ENCODE measurements at regions of chr4 and their contacts with region 1.

Region 1: DNA sequence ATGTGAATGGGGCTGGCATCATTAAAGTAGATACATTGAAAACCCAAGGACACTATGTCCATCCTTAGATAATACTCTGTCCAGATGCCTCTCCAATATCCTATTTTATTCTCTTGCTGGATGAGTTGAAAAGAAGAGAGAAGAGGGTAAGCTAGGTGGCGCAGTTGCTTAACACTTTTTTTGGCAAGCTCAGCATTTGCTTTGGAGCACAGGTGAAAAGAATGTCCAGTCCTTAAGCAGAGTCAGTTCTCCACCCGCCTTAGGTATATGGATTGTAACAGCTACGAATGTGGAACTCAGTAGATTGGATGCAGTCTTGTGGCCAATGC is 208.4 kb downstream of the NWD2 start:
- DNase-seq: peak; percentile 10 to 39 (median 22)
- H3K4me3 ChIP-seq: peak overlapping the region in 1 of 3 experiments; percentile 81
- H3K4me3 Mint-ChIP-seq: peak overlapping the region; percentile 78 to 89
- H3K27ac ChIP-seq: no peak overlapping the region
- H3K27ac Mint-ChIP-seq: peak overlapping the region in 1 of 7 donors; percentile 63
- H3K4me1 ChIP-seq: peaks cover 13 to 16% of the 10 kb centered on the region in 2 donors
- H3K4me1 Mint-ChIP-seq: peaks cover 16% of the 10 kb centered on the region
- H3K27me3 ChIP-seq: peaks cover 36 to 52% of the 10 kb centered on the region in 2 donors
- H3K27me3 Mint-ChIP-seq: peaks cover 38 to 53% (median 43%) of the 10 kb centered on the region in 3 donors
- CTCF ChIP-seq: peak; percentile 45

Region 2: DNA sequence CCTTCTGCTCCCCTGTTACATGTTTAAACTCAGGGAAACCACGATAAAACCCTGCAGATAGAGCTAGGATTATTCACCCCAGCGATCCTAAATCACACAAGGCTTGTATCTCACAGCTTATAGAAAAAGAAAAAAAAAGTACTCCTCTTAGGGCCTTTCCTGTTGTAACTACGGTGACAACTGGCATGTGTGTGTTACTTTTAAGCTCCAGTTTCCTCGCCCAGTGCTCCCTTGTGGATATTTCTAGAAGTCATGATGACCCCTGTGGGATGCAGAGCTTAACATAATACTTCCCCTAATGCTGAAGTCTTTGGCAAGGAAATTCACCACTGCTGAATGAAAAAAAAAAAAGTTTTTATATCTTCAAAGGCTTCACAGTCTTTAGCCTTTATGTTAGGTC is 93.7 kb before region 1 on chr4:
- intact Hi-C with region 1: no loop called
- DNase-seq: no peak
- H3K4me3 ChIP-seq: no peak overlapping the region
- H3K4me3 Mint-ChIP-seq: no peak overlapping the region
- H3K27ac ChIP-seq: no peak overlapping the region
- H3K27ac Mint-ChIP-seq: no peak overlapping the region
- H3K4me1 ChIP-seq: no peaks in the 10 kb centered on the region
- H3K4me1 Mint-ChIP-seq: no peaks in the 10 kb centered on the region
- H3K27me3 ChIP-seq: no peaks in the 10 kb centered on the region
- H3K27me3 Mint-ChIP-seq: peaks cover 0 to 4% (median 2%) of the 10 kb centered on the region in 3 donors
- CTCF ChIP-seq: no peak

Region 3: GRCh38 chr4:37490391-37491347 is 37.8 kb after region 1 on chr4:
- intact Hi-C with region 1: no loop called
- DNase-seq: no peak
- H3K4me3 ChIP-seq: no peak overlapping the region
- H3K4me3 Mint-ChIP-seq: no peak overlapping the region
- H3K27ac ChIP-seq: no peak overlapping the region
- H3K27ac Mint-ChIP-seq: no peak overlapping the region
- H3K4me1 ChIP-seq: no peaks in the 10 kb centered on the region
- H3K4me1 Mint-ChIP-seq: no peaks in the 10 kb centered on the region
- H3K27me3 ChIP-seq: no peaks in the 10 kb centered on the region
- H3K27me3 Mint-ChIP-seq: peaks cover 4 to 9% (median 4%) of the 10 kb centered on the region in 3 donors
- CTCF ChIP-seq: no peak

Region 4: DNA sequence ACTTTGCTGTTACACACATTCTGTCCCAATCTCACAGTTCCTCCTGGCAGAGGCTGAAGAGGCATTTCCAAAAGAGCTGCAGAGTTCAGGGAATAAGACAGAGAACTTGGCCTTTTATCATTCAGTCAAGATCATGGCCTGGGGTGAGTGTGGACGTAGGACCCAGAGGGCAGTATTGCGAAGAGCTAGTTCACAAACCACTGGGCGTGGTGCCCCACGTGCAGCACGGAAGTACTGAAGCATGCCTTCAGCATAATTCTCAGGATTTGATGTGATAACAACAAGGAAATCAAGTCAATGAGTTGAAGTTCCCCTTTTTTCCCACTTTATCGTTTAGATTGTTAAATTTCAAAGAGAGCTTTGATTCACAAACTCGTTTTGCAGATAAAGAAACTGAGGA is 115.6 kb after region 1 on chr4:
- intact Hi-C with region 1: loop called in 1 of 2 experiments (anchors 5 kb)
- DNase-seq: peak in 1 of 3 donors; percentile 8
- H3K4me3 ChIP-seq: no peak overlapping the region
- H3K4me3 Mint-ChIP-seq: no peak overlapping the region
- H3K27ac ChIP-seq: no peak overlapping the region
- H3K27ac Mint-ChIP-seq: peak overlapping the region in 3 of 7 donors; percentile 5 to 48 (median 26)
- H3K4me1 ChIP-seq: peaks cover 12 to 16% of the 10 kb centered on the region in 2 donors
- H3K4me1 Mint-ChIP-seq: peaks cover 15% of the 10 kb centered on the region
- H3K27me3 ChIP-seq: no peaks in the 10 kb centered on the region
- H3K27me3 Mint-ChIP-seq: peaks cover 0 to 5% (median 2%) of the 10 kb centered on the region in 3 donors
- CTCF ChIP-seq: no peak

Measured in CD14-positive monocyte (primary cell).